Endothelial cell of umbilical vein (primary cell): ENCODE measurements at regions of chr10 and their contacts with region 1.

Region 1: GRCh38 chr10:55500932-55501559 is 700.0 kb upstream of the PCDH15 start:
- DNase-seq: peak; percentile 57
- H3K4me3 ChIP-seq: no peak overlapping the region
- H3K27ac ChIP-seq: no peak overlapping the region
- H3K4me1 ChIP-seq: no peaks in the 10 kb centered on the region
- H3K27me3 ChIP-seq: no peaks in the 10 kb centered on the region
- CTCF ChIP-seq: peak; percentile 58 to 64
- POLR2A ChIP-seq: no peak

Region 2: GRCh38 chr10:55287346-55287745 is 213.7 kb before region 1 on chr10:
- CTCF ChIA-PET with region 1: interaction called, 3 read pairs
- POLR2A ChIA-PET with region 1: no interaction called
- dilution Hi-C with region 1: no loop called
- intact Hi-C with region 1: loop called (anchors 5 kb)
- DNase-seq: peak; percentile 2
- H3K4me3 ChIP-seq: no peak overlapping the region
- H3K27ac ChIP-seq: no peak overlapping the region
- H3K4me1 ChIP-seq: no peaks in the 10 kb centered on the region
- H3K27me3 ChIP-seq: no peaks in the 10 kb centered on the region
- CTCF ChIP-seq: no peak
- POLR2A ChIP-seq: no peak